Posterior vena cava (tissue), 2 donors: ENCODE measurements at regions of chr16 and their contacts with region 1.

Region 1: DNA sequence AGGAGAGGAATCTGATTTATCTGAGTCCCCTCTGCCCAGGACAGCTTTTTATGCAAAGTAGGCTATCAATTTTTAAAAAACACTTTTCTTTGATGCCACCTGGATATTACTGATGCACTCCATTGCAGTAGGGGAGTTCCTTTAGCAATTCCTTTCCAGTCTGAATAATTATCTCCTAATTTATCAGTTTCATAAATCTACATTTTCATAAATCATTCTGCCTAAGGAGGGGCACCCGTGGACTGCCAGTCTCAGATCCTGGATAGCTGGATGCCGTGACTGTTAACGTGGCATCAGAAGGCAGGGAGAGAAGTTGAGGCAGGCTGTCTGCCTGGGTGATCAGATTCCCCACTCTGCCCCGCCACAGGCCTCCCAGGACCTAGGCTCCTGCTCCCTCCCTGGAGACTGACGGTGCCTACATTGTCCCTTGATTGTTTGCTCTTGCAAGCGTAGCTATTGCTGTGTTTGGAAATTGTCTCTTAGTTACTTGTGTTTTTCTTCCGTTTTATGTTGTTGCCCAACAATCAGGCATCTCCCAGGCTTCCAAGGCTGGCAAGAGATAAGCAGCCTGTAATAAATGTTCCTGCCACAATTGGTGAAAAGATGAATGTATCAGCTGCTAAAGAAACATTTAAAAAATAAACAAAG is 75.2 kb downstream of the KATNIP start:
- DNase-seq: no peak

Region 2: GRCh38 chr16:27665881-27666280 is 40.7 kb after region 1 on chr16:
- intact Hi-C with region 1: loop called in 1 of 2 experiments (anchors 1 kb)
- DNase-seq: no peak